Natural killer cell (primary cell): ENCODE measurements at regions of chr18 and their contacts with region 1.

Region 1: DNA sequence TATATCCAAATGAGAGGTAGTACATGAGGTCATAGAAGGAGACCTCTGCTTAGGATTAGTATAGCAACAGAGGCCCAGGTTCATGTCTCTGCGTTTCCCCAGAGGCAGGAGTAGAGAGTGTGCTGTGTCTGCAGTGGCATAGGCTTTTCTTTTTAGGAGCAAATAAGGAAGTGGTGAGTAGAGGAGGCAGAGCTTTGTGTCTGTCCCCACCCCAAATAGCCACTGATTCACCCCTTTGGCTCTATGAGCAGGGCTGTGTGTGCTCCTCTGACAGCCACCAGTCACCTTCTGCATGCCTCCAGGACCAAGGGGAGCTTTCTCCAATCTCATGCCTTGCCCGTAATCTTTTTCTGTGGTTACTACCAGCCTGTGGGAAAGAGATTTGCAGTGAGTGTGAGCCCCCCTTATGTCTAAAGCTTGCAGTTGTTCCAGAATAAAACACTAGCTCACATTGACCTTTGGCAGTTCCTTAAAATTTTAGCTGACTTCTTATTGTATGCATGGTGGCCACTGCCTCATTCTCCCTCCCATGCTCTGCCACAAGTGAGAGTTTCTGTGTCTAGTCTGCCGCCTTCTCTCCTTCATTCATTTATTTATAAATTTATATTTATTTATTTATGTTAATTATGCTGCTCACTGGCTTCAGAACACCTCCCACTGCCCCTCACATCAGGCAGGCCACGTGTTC is 23.5 kb upstream of the ELAC1 start:
- DNase-seq: no peak
- ATAC-seq: no peak
- H3K4me3 ChIP-seq: no peak overlapping the region
- H3K4me3 Mint-ChIP-seq: no peak overlapping the region
- H3K27ac ChIP-seq: no peak overlapping the region
- H3K27ac Mint-ChIP-seq: no peak overlapping the region
- H3K4me1 ChIP-seq: no peaks in the 10 kb centered on the region
- H3K4me1 Mint-ChIP-seq: no peaks in the 10 kb centered on the region
- H3K27me3 ChIP-seq: no peaks in the 10 kb centered on the region
- H3K27me3 Mint-ChIP-seq: no peaks in the 10 kb centered on the region
- CTCF ChIP-seq: no peak

Region 2: GRCh38 chr18:50614838-50615237 is 329.6 kb before region 1 on chr18:
- intact Hi-C with region 1: no loop called
- DNase-seq: no peak
- ATAC-seq: no peak
- H3K4me3 ChIP-seq: no peak overlapping the region
- H3K4me3 Mint-ChIP-seq: no peak overlapping the region
- H3K27ac ChIP-seq: no peak overlapping the region
- H3K27ac Mint-ChIP-seq: no peak overlapping the region
- H3K4me1 ChIP-seq: no peaks in the 10 kb centered on the region
- H3K4me1 Mint-ChIP-seq: no peaks in the 10 kb centered on the region
- H3K27me3 ChIP-seq: no peaks in the 10 kb centered on the region
- H3K27me3 Mint-ChIP-seq: peaks cover 0 to 18% of the 10 kb centered on the region in 2 donors
- CTCF ChIP-seq: no peak

Region 3: DNA sequence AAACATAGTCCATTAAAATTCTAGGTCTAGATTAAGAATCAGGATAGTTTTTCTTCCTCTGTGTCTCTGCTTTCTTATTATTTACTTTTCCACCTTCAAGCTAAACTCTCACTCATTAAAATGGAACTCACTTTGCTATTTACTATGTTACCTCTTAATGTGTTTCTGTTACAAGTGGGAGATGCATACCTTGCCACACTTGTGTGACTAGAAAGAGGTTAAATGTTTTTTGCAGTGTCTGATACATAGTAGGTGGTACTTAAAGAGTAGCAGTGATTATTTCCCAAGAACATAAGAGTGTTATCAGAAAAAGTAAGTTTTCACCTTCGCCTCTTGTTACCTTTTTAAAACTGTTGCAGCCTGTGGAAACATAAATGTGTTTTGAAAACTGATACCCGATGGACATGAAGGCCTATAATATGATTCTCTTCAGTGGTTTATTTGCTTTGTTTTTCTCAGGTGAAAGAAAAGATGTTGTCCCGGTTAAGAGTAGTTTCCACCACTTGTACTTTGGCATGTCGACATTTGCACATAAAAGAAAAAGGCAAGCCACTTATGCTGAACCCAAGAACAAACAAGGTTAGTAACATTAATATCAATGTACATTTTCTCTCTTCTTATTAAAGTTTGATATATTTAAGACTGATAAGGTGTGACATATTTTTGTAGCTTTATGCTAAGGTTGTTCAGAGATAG is 48.9 kb before region 1 on chr18:
- intact Hi-C with region 1: loop called (anchors 10 kb)
- DNase-seq: no peak
- ATAC-seq: no peak
- H3K4me3 ChIP-seq: no peak overlapping the region
- H3K4me3 Mint-ChIP-seq: no peak overlapping the region
- H3K27ac ChIP-seq: no peak overlapping the region
- H3K27ac Mint-ChIP-seq: peak overlapping the region; percentile 56 to 68
- H3K4me1 ChIP-seq: no peaks in the 10 kb centered on the region
- H3K4me1 Mint-ChIP-seq: peaks cover 21 to 32% of the 10 kb centered on the region in 2 donors
- H3K27me3 ChIP-seq: no peaks in the 10 kb centered on the region
- H3K27me3 Mint-ChIP-seq: no peaks in the 10 kb centered on the region
- CTCF ChIP-seq: no peak